Activated naive CD4-positive, alpha-beta T cell treated with anti-CD3 and anti-CD28 coated beads for 36 hours (primary cell): ENCODE measurements at regions of chr2 and their contacts with region 1.

Region 1: GRCh38 chr2:216034065-216034464 is 20.7 kb upstream of the MREG start:
- DNase-seq: peak; percentile 94
- H3K4me3 Mint-ChIP-seq: no peak overlapping the region
- H3K27ac Mint-ChIP-seq: no peak overlapping the region
- H3K4me1 Mint-ChIP-seq: peaks cover 26% of the 10 kb centered on the region
- H3K27me3 Mint-ChIP-seq: no peaks in the 10 kb centered on the region

Region 2: GRCh38 chr2:216013080-216013909 is 20.8 kb before region 1 on chr2 and contains the start of gene MREG:
- CTCF ChIA-PET with region 1: interaction called, 12 read pairs
- intact Hi-C with region 1: loop called (anchors 1 kb)
- DNase-seq: peak; percentile 91
- H3K4me3 Mint-ChIP-seq: peak within 1 kb of the TSS; percentile 81
- H3K27ac Mint-ChIP-seq: no peak within 1 kb of the TSS
- H3K4me1 Mint-ChIP-seq: peaks cover 51% of the 10 kb centered on the region
- H3K27me3 Mint-ChIP-seq: no peaks in the 10 kb centered on the region
- total RNA-seq, gene MREG: 3.1 to 3.9 TPM

Region 3: DNA sequence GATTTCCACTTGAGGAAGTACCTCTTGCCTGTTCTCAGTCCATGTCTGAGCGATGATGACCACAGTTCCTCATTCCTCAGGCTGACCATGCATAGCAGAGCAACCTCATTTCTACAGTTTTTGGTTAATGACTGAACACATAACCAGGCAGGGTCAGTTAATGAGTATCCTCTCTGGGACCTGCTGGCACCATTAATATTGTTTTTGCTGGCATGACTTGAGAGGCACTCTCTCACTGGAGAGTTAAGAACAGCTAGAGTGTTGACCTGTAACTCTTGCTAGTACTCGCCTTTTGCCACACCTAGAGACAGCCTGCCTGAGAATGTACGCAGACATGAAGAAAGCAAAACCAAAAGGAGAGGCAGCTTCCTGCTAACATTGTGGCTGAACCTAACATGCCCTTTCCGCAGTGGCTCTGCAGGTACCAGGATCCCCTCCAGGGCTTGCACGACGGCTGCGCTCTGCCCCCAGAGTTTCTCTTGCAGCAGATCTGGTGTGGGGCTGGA is 23.7 kb after region 1 on chr2:
- CTCF ChIA-PET with region 1: interaction called, 19 read pairs
- intact Hi-C with region 1: loop called (anchors 1 kb)
- DNase-seq: peak; percentile 66
- H3K4me3 Mint-ChIP-seq: peak overlapping the region; percentile 65
- H3K27ac Mint-ChIP-seq: peak overlapping the region; percentile 81
- H3K4me1 Mint-ChIP-seq: peaks cover 24% of the 10 kb centered on the region
- H3K27me3 Mint-ChIP-seq: no peaks in the 10 kb centered on the region

Region 4: DNA sequence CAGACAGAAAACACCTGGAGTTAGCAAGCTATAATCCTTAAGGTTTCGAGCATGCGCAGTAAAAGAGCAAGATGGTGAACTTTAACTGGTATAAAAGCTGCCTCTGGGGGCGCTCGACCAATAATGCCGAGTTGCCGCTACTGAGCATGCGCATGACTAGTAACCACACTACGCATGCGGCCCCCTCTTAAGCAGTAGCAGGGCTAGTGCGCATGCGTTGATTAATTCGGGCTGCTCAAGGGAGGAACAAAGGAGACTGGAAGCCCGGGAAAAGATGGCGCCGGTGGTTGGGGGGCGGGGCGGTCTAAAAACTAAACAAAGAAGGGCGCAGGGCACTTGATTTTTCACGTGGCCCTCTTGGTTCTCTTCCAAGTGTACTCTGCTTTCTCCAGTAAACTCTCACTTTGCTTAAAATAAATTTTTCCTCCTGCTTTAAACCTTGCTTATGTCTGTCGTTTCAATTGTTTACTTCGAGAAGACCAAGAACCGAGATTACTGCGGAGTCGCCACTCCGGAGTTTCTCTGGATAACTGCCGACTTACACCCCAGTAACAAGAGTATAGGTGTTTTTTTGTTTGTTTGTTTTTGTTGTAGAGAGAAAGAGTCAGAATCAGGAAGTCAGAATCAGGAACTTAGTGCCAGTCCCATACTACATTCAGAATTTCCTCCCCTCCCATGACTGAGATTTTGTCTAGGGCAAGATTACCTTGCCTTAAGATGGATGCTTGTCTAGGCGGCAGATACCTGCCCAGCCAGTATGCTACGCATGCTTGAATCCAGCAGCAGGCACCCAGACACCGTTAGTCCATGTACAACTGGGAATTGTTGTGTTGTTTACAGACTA is 80.9 kb after region 1 on chr2:
- CTCF ChIA-PET with region 1: interaction called, 33 read pairs
- intact Hi-C with region 1: loop called (anchors 1 kb)
- DNase-seq: peak; percentile 99
- H3K4me3 Mint-ChIP-seq: peak overlapping the region; percentile 89
- H3K27ac Mint-ChIP-seq: peak overlapping the region; percentile 99
- H3K4me1 Mint-ChIP-seq: peaks cover 91% of the 10 kb centered on the region
- H3K27me3 Mint-ChIP-seq: no peaks in the 10 kb centered on the region

Region 5: DNA sequence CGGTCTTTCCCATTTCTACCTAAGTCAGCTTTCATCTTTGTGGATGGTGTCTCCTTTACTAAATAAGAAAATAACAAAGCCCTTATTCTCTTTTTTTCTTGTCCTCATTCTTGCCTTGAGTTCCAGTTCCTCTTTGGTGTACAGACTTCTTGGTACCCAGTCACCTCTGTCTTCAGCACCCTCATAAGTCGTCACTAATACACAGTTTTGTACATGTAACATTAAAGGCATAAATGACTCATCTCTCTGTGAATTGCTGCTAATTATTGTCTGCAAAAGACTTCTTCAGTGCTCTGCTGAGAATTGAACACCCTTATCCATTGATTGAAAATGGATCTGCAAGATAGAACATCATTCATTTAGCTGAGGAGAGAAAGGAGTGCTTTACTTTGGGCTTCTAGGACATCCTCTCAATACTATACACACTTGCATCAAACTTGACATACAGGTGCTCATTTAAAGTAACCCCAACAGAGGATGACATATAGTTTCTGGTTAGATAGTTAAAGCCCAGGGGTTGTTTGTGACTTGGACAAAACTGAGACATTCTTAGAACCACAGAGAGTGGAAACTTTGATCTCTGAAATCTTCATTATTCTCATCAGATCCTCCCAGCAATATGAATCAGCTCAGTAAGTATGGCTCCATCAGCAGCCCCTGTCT is 172.1 kb after region 1 on chr2:
- CTCF ChIA-PET with region 1: no interaction called
- intact Hi-C with region 1: loop called (anchors 1 kb)
- DNase-seq: no peak
- H3K4me3 Mint-ChIP-seq: no peak overlapping the region
- H3K27ac Mint-ChIP-seq: peak overlapping the region; percentile 93
- H3K4me1 Mint-ChIP-seq: peaks cover 77% of the 10 kb centered on the region
- H3K27me3 Mint-ChIP-seq: no peaks in the 10 kb centered on the region

Region 6: GRCh38 chr2:216412022-216412999 is 378.2 kb after region 1 on chr2 and contains the start of gene SMARCAL1:
- CTCF ChIA-PET with region 1: no interaction called
- intact Hi-C with region 1: loop called (anchors 5 kb)
- DNase-seq: peak; percentile 100
- H3K4me3 Mint-ChIP-seq: peak within 1 kb of the TSS; percentile 92
- H3K27ac Mint-ChIP-seq: peak within 1 kb of the TSS; percentile 90
- H3K4me1 Mint-ChIP-seq: peaks cover 6% of the 10 kb centered on the region
- H3K27me3 Mint-ChIP-seq: no peaks in the 10 kb centered on the region
- total RNA-seq, gene SMARCAL1: 17.0 to 18.2 TPM